Prostate gland (tissue), 2 donors: ENCODE measurements at regions of chr5 and their contacts with region 1.

Region 1: GRCh38 chr5:13987843-13988464 is 43.5 kb upstream of the DNAH5 start:
- DNase-seq: peak; percentile 58
- H3K4me3 ChIP-seq: no peak overlapping the region
- H3K27ac ChIP-seq: no peak overlapping the region
- H3K4me1 ChIP-seq: no peaks in the 10 kb centered on the region
- H3K27me3 ChIP-seq: no peaks in the 10 kb centered on the region
- CTCF ChIP-seq: peak; percentile 70 to 90 (median 83)
- POLR2A ChIP-seq: no peak

Region 2: DNA sequence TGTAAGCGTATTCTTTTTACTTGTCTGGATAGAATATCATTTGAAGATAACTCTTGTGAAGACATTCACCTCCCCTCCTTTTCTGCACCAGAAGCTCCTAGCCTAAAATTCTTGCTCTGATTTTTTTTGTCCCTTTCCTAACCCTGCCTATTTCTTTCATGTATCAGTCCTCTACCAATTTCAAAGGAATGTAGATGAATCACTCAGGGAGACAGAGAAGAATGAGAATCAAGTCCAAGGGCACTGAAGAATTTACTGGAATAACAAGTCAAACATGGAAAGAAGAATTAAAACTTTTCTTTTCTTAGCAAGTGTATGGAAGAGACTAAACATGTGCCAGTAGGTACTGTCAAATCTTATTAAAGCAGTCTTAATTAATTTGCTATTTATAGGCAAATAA is 662.2 kb before region 1 on chr5:
- intact Hi-C with region 1: no loop called
- DNase-seq: no peak
- H3K4me3 ChIP-seq: no peak overlapping the region
- H3K27ac ChIP-seq: no peak overlapping the region
- H3K4me1 ChIP-seq: no peaks in the 10 kb centered on the region
- H3K27me3 ChIP-seq: no peaks in the 10 kb centered on the region
- CTCF ChIP-seq: no peak
- POLR2A ChIP-seq: no peak

Region 3: DNA sequence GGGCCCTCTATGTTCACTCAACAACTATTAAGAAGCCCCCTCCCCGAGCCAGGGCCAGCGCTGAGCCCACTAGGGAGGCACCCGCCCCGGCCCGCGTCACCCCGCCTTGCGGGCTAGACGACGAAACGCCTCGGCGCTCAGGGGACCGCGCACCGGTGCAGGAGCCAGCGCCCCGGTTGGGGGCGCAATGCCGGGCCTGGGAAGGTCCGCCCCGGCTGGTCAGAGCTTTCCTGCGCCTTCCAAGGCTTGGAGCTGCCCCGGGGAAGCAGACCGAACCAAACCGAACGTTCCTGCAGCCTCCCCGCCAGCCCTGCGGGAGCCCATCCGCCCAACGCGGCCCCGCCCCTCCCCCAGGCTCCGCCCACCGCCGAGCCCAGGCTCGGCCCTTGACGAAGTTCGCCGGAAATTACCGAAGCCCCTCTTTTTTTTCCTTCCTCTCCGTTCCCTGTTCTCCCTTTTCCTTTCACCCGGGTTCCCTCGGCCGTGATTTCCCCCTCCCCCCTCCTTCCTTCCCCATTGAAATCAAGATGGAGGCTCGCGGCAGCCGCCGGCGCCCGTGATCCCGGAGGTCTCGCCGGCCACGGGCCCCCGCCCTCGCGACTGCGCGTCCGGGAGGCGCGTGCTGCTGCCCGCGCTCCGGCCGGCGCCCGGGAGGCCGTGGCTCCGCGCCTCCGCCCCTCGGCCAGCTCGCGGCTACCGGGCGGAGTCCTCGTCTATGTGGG is 155.0 kb after region 1 on chr5 and contains the start of gene TRIO:
- intact Hi-C with region 1: loop called (anchors 1 kb)
- DNase-seq: peak; percentile 93
- H3K4me3 ChIP-seq: peak within 1 kb of the TSS; percentile 65 to 73
- H3K27ac ChIP-seq: peak within 1 kb of the TSS; percentile 94 to 95
- H3K4me1 ChIP-seq: peaks cover 2% of the 10 kb centered on the region
- H3K27me3 ChIP-seq: no peaks in the 10 kb centered on the region
- CTCF ChIP-seq: peak in 3 of 4 experiments; percentile 46 to 61 (median 59)
- POLR2A ChIP-seq: peak; percentile 71
- total RNA-seq, gene TRIO: 90.3 to 197 TPM

Region 4: DNA sequence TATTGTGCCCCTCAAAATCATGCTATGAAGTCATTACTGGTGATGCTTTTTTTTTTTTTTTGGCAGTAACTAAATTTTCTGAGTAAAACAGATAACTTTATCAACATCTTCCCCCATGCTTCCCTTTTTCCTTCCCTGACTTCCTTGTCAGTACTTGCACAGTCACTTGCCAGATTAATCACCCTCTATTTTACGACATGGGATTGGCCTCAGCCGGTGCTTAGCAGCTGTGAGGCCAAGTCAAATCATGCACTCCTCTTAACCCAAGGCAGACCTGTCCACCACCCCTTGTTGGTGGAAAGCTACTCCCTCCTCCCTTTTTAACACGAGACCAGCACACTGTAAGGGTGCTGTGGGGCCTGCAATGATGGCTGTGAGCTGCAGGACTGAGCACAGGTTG is 475.7 kb after region 1 on chr5:
- intact Hi-C with region 1: no loop called
- DNase-seq: no peak
- H3K4me3 ChIP-seq: no peak overlapping the region
- H3K27ac ChIP-seq: no peak overlapping the region
- H3K4me1 ChIP-seq: peaks cover 5% of the 10 kb centered on the region
- H3K27me3 ChIP-seq: no peaks in the 10 kb centered on the region
- CTCF ChIP-seq: no peak
- POLR2A ChIP-seq: no peak

Region 5: GRCh38 chr5:14664302-14665100 is 676.5 kb after region 1 on chr5 and contains the start of gene OTULIN:
- intact Hi-C with region 1: loop called (anchors 10 kb)
- DNase-seq: peak; percentile 87
- H3K4me3 ChIP-seq: peak within 1 kb of the TSS; percentile 72 to 74
- H3K27ac ChIP-seq: peak within 1 kb of the TSS; percentile 93 to 98
- H3K4me1 ChIP-seq: peaks cover 4% of the 10 kb centered on the region
- H3K27me3 ChIP-seq: no peaks in the 10 kb centered on the region
- CTCF ChIP-seq: peak in 2 of 4 experiments; percentile 6 to 20
- POLR2A ChIP-seq: peak; percentile 97
- total RNA-seq, gene OTULIN: 35.5 to 51.8 TPM

Region 6: GRCh38 chr5:14781106-14781505 is 793.2 kb after region 1 on chr5:
- intact Hi-C with region 1: no loop called
- DNase-seq: no peak
- H3K4me3 ChIP-seq: no peak overlapping the region
- H3K27ac ChIP-seq: no peak overlapping the region
- H3K4me1 ChIP-seq: peaks cover 4% of the 10 kb centered on the region
- H3K27me3 ChIP-seq: no peaks in the 10 kb centered on the region
- CTCF ChIP-seq: no peak
- POLR2A ChIP-seq: no peak